ENCODE measurements at regions of chr12 and their contacts with region 1.

Region 1: DNA sequence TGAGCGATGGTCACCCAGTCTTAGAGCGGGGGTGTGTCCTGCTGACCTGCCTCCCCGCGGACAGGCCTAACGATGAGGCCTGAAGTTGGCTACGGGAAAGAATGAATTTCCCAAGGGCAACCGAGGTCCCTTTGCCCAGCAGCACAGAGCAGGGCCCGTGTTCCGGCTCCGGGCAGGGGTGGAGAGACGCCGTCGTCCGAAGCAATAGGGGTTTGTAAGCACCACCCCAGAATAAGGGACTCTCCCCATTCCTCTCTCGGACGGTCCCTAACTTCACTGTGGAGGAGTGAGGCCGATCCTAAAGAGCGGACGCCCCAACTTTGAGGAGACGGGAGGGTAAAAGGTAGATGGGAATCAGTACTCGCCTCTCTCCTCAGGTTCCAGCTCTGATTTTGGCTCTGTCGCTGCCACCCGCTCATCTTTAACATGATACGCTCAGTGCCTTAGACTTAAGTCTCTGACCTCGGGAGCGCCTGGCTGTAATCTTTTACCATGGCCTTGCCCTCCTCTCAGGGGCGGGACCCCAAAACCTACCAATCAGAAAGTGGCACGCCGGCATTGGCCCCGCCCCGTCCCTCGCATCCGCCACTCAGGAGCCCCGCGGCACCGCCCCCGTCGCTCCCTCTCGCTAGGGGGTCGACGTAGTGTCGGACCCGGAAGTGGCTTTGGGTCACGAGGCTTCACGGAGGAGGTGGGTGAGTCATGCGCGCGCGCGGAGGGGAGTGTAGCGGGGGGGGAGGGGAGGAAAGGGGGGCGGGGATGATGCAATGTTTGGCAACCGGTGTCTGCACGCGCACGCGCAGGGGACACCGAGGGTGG is at the start of gene DDIT3:
- DNase-seq: peak; percentile 100
- H3K4me3 ChIP-seq: peak within 1 kb of the TSS; percentile 84
- H3K27ac ChIP-seq: peak within 1 kb of the TSS; percentile 97
- H3K4me1 ChIP-seq: peaks cover 49% of the 10 kb centered on the region
- CTCF ChIP-seq: no peak
- total RNA-seq, gene DDIT3: 42.7 and 43.7 TPM in 2 replicates

Region 2: DNA sequence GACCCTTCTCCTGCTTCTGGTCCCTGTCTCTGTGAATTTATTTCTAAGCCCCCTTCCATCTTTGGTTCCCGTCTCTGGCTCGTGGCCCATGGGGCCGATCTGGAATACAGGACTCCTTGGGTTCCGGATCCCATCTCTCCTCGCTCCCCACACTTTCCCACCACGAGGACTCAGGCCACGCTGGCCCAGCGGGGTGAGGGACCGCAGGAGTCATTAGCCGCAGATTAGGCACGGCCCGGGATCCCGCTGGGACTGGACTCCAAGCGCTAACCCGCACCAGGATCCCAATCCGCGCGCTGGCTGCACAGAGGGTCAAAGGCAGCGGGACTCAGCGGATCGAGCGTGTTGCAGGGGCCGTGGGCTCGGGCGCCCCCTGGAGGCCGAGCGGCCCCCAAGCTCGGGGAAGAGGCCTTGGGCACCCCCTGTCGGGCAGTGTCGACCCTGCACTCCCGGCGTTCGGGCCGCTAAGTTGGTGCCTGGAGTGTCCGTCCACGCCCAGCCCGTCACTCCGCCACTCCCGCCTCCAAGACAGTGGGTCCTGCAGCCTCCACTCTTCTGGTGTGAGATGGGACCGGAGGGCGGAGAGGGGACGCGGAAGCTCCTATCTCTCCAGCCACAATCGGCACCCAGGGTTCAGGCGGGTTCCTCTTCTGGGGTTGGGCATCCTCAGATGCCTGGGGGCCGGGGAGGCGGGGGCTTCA is 281.3 kb before region 1 on chr12:
- CTCF ChIA-PET with region 1: no interaction called
- POLR2A ChIA-PET with region 1: no interaction called
- intact Hi-C with region 1: loop called (anchors 2 kb)
- DNase-seq: peak; percentile 90
- H3K4me3 ChIP-seq: peak overlapping the region; percentile 74
- H3K27ac ChIP-seq: peak overlapping the region; percentile 92
- H3K4me1 ChIP-seq: peaks cover 53% of the 10 kb centered on the region
- CTCF ChIP-seq: peak; percentile 100

Region 3: DNA sequence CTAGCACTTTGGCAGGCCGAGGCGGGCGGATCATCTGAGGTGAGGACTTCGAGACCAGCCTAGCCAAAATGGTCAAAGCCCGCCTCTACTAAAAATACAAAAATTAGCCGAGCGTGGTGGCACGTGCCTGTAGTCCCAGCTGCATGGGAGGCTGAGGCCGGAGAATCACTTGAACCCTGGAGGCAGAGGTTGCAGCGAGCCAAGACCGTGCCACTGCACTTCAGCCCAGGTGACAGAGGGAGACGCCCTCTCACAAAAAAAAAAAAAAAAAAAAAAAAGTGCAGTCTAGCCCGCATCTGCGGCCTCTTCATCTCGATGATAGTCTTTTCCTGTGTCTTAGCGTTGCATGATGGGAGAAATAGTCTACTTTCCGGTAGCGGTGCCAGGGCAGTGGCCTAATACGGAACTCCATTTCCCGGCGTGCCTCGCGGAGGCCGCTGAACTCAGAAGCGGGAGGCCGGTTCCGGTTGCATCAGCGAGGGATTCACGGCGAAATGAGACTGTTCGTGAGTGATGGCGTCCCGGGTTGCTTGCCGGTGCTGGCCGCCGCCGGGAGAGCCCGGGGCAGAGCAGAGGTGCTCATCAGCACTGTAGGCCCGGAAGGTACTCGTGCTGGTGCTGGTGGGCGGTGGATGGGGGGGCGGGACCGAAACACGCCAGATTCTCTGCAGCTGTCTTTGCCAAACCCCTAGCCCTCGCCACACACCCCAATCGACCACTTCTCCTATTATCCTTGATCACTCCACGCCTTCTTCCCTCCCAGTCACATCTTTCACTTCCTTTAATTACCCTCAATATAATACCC is 32.5 kb before region 1 on chr12 and contains the start of gene MARS1:
- CTCF ChIA-PET with region 1: interaction called, 3 read pairs
- POLR2A ChIA-PET with region 1: interaction called, 3 read pairs
- intact Hi-C with region 1: loop called (anchors 1 kb)
- DNase-seq: peak; percentile 99
- H3K4me3 ChIP-seq: peak within 1 kb of the TSS; percentile 98
- H3K27ac ChIP-seq: peak within 1 kb of the TSS; percentile 65
- H3K4me1 ChIP-seq: peaks cover 26% of the 10 kb centered on the region
- CTCF ChIP-seq: peak; percentile 62
- total RNA-seq, gene MARS1: 262 and 272 TPM in 2 replicates

Region 4: DNA sequence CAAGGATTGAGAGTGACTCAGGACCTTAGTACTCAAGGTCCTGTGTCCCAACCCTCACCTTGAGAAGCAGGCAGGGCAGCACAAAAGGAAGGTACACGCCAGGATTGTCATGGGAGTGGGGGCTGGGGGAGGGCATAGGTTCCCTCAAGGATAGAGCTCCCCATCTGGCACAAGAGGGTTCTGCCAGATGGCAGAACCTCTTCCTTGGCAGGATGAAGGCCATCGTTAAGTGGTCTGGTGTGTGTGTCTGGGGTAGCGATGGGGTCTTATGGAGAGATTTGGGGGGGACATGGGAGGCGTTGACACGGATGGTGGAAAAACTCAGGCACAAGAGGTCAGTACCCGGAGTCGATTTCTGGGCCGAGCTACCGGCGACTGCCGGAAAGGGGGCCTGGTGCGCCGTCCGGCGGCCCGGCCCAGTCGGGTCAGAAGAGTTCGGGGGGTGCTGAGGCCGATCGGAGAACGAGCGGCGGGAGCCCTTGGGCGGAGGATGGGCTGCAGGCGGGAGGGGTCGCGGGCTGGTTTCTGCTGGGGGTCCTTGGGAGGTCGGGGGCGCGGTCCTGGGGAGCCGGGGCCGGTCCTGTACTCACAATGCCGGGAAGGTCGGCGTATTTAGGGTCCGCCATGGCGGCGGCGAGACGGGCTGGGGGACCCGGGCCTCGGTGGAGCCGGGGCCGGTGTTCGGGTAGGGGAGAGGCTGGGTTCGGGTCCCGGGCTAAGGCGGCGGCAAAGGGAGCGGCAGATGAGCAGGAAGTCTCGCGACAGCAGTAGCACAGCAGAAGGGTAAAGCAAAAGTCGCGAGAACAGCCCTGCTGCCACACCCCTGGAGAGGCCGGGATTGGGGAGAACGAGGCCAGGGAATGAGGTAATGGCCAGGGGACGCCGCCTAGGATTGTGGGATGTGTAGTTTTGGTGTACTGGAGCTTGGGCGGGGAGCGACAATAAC is 26.4 kb after region 1 on chr12 and contains the start of gene DCTN2:
- CTCF ChIA-PET with region 1: no interaction called
- POLR2A ChIA-PET with region 1: interaction called, 8 read pairs
- intact Hi-C with region 1: loop called (anchors 2 kb)
- DNase-seq: peak; percentile 97
- H3K4me3 ChIP-seq: peak within 1 kb of the TSS; percentile 86
- H3K27ac ChIP-seq: peak within 1 kb of the TSS; percentile 11
- H3K4me1 ChIP-seq: peaks cover 23% of the 10 kb centered on the region
- CTCF ChIP-seq: peak; percentile 40
- total RNA-seq, gene DCTN2: 61.8 and 68.4 TPM in 2 replicates

Region 5: GRCh38 chr12:57751788-57752667 is 231.8 kb after region 1 on chr12 and contains the start of gene CDK4:
- CTCF ChIA-PET with region 1: no interaction called
- POLR2A ChIA-PET with region 1: no interaction called
- intact Hi-C with region 1: loop called (anchors 5 kb)
- DNase-seq: peak; percentile 100
- H3K4me3 ChIP-seq: peak within 1 kb of the TSS; percentile 92
- H3K27ac ChIP-seq: peak within 1 kb of the TSS; percentile 42
- H3K4me1 ChIP-seq: peaks cover 39% of the 10 kb centered on the region
- CTCF ChIP-seq: no peak
- total RNA-seq, gene CDK4: 272 and 280 TPM in 2 replicates